ENCODE measurements at regions of chr1 and their contacts with region 1.

Region 1: DNA sequence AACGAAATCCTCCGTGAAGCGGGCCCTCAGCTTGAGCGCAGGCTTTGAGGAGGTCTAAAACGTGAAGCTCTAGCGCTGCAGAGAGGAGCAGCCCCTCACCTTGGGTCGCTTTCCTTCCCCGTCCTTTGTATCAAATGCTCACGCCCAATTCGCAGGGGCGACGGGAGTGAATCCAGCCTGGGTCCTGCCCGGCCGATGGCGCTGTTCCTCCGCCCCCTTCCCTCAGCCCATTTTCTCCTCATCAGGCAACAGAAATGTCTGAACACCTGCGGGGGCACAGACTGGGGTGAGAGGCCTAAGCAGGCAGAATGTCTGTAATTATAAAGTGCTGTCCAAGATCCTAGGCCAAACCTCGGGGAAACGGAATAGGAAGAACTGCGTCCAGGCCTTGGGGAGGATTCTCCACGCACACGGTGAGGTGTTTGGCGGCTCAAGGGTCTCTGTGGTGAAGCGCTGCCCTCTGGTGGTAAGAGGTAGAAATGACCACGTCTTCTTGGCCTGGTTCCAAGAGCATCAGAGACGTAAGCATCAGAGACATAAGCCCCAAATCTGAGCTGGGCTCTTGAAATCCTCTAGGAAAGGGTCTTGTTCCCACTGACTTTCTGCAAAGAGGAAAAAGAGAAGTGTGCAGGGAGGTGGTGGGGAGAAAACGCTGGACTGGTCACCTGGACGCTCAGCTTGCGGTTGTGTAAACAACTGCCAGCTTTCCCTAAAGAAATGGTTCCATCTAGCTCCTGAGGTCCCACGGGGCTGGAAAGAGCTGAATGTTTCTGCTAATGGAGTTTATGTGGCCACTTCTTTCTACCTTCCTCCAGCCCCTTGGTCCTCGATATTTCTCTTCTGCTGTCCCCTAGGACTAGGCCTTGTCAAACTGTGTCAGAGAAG is 92.1 kb upstream of the CD53 start:
- DNase-seq: peak; percentile 74 to 81 (median 76)
- H3K4me3 ChIP-seq: no peak overlapping the region
- H3K4me3 Mint-ChIP-seq: peak overlapping the region in 5 of 8 donors; percentile 3 to 47 (median 28)
- H3K27ac ChIP-seq: no peak overlapping the region
- H3K27ac Mint-ChIP-seq: peak overlapping the region in 3 of 7 donors; percentile 31 to 74 (median 67)
- H3K4me1 ChIP-seq: peaks cover 37% of the 10 kb centered on the region
- H3K4me1 Mint-ChIP-seq: peaks cover 33 to 51% (median 39%) of the 10 kb centered on the region in 4 donors
- H3K27me3 ChIP-seq: no peaks in the 10 kb centered on the region
- H3K27me3 Mint-ChIP-seq: peaks cover 0 to 1% of the 10 kb centered on the region in 2 donors

Region 2: GRCh38 chr1:110209715-110210603 is 570.9 kb before region 1 on chr1 and contains the start of gene KCNC4:
- CTCF ChIA-PET with region 1: interaction called, 10 read pairs
- POLR2A ChIA-PET with region 1: no interaction called
- intact Hi-C with region 1: no loop called
- DNase-seq: peak; percentile 91 to 95 (median 94)
- H3K4me3 ChIP-seq: peak within 1 kb of the TSS; percentile 36 to 68
- H3K4me3 Mint-ChIP-seq: peak within 1 kb of the TSS; percentile 87 to 95 (median 89)
- H3K27ac ChIP-seq: peak within 1 kb of the TSS; percentile 81
- H3K27ac Mint-ChIP-seq: peak within 1 kb of the TSS; percentile 89 to 98 (median 97)
- H3K4me1 ChIP-seq: peaks cover 44% of the 10 kb centered on the region
- H3K4me1 Mint-ChIP-seq: peaks cover 32 to 64% (median 45%) of the 10 kb centered on the region in 4 donors
- H3K27me3 ChIP-seq: no peaks in the 10 kb centered on the region
- H3K27me3 Mint-ChIP-seq: no peaks in the 10 kb centered on the region
- total RNA-seq, gene KCNC4: 11.9 to 13.4 TPM

Region 3: DNA sequence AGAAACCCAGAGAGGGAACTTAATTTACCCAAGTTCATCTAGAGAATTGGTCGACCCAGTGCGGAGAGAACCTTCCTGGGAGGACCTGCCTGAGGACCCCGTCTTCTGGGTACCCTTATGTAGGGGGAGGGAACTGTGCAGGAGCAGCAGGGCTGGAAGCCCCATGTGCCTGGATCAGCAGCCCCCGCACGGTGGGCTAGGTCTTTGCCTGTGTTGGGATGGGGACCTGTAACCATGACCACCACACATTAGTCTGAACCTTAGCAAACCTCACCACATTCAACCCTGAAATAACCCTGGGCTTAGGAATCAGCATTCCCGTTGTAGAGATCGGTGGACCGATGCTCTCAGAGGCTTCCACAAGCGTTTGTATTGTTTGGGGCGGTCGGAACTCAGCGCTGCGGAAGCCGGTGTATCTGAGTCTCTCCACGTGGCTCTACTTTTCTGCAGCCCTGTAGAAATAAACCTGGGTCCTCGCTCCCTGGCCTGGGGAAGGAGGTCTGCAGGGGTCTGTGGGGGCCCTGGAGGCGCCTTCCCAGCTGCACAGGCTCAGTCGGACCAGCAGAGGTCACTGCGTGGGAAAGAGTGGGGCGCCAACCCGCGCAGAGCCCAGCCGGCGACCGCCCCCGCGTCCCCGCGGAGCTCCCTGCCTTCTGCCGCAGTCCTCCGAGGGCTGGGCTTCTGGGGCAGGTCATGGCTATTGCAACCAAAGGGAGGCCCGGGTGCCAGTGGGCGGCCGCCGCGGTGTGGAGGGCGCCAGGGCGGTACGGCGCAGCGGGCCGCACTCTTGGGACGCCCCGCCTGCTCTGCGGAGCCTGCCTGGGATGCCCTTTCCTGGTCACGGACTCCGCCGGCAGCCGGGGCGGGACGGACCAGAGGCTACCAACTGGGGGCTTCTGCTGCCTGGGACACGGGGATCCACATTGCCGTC is 225.7 kb before region 1 on chr1:
- CTCF ChIA-PET with region 1: interaction called, 91 read pairs
- POLR2A ChIA-PET with region 1: no interaction called
- intact Hi-C with region 1: loop called (anchors 1 kb)
- DNase-seq: peak in 4 of 5 donors; percentile 43 to 56 (median 51)
- H3K4me3 ChIP-seq: no peak overlapping the region
- H3K4me3 Mint-ChIP-seq: peak overlapping the region in 6 of 8 donors; percentile 29 to 68 (median 50)
- H3K27ac ChIP-seq: no peak overlapping the region
- H3K27ac Mint-ChIP-seq: no peak overlapping the region
- H3K4me1 ChIP-seq: peaks cover 3% of the 10 kb centered on the region
- H3K4me1 Mint-ChIP-seq: peaks cover 2 to 9% (median 4%) of the 10 kb centered on the region in 4 donors
- H3K27me3 ChIP-seq: peaks cover 18% of the 10 kb centered on the region
- H3K27me3 Mint-ChIP-seq: peaks cover 30 to 43% of the 10 kb centered on the region in 2 donors

Region 4: DNA sequence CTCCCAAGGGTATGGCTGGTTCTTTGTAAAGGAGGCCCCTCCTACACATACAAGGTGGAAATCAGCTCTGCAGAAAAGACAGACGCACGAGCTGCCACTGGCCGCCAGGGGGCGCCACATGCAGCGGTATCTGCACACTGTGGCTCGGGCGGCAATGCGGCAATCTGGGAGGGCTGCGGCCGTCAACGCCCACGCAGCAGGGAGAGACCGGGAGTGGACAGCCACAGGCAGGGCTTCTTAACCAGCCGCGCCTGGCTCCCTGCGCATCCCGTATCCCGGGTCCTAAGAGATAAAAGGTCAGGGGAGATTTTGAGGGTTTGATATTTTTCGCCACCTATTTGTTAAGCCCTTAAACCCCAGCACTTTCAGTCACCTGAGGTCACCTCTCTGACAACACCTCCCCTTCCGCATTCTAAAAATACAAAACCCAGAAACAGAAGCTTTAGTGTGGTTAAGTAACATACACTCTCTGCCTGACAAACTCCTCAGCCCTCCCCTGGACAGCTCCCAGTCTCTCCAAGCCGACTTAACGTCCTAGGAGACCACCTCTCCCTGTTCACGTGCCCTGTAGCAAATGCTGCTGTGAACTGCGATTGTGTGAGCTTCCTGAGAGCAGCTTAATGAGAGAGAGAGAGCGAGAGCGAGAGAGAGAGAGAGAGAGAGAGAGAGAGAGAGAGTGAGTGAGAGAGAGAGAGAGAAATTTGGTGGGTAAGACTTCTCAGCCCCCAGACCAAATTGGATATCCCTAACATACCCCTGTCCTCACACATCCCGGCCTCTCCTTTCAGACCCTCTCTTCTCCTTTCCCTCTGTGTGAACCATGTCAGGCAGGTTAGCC is 161.2 kb before region 1 on chr1:
- CTCF ChIA-PET with region 1: interaction called, 175 read pairs
- POLR2A ChIA-PET with region 1: interaction called, 19 read pairs
- intact Hi-C with region 1: loop called (anchors 1 kb)
- DNase-seq: peak; percentile 86 to 92 (median 91)
- H3K4me3 ChIP-seq: peak overlapping the region; percentile 60 to 77
- H3K4me3 Mint-ChIP-seq: peak overlapping the region; percentile 86 to 97 (median 91)
- H3K27ac ChIP-seq: peak overlapping the region; percentile 50
- H3K27ac Mint-ChIP-seq: peak overlapping the region; percentile 90 to 99 (median 97)
- H3K4me1 ChIP-seq: peaks cover 33% of the 10 kb centered on the region
- H3K4me1 Mint-ChIP-seq: peaks cover 32 to 50% (median 38%) of the 10 kb centered on the region in 4 donors
- H3K27me3 ChIP-seq: no peaks in the 10 kb centered on the region
- H3K27me3 Mint-ChIP-seq: no peaks in the 10 kb centered on the region

Region 5: DNA sequence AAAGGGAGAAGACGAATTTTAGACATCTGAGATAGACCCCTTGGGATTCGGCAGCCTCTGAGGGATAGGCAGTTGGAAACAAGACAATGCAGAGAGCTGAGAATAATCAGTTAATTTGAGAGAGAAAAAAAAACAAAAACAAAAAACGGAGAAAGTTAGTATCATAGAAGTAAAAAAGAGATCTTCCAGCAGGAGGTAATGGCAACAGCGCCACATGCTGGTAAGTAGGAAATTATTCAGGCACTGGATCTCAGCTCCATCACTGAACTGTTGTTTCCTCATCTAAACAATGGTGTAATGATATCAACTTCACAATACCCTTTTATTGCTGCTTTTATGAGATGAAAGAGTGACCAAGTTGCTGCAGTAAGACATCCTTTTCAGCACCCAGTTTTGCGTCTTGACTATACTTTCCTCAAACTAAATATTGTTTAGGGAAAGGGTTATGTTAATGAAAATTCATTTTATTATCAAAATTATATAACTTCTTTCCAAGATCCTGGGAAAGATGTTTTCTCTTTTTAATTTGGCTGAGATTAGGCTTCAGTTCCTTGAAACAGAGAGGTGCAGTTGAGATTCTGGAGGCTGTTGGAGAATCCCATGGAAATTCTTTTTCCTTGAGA is 14.7 kb before region 1 on chr1:
- CTCF ChIA-PET with region 1: interaction called, 89 read pairs
- POLR2A ChIA-PET with region 1: no interaction called
- intact Hi-C with region 1: loop called (anchors 1 kb)
- DNase-seq: peak; percentile 59 to 71 (median 68)
- H3K4me3 ChIP-seq: no peak overlapping the region
- H3K4me3 Mint-ChIP-seq: no peak overlapping the region
- H3K27ac ChIP-seq: no peak overlapping the region
- H3K27ac Mint-ChIP-seq: peak overlapping the region in 1 of 7 donors; percentile 80
- H3K4me1 ChIP-seq: peaks cover 4% of the 10 kb centered on the region
- H3K4me1 Mint-ChIP-seq: peaks cover 0 to 9% (median 2%) of the 10 kb centered on the region in 4 donors
- H3K27me3 ChIP-seq: no peaks in the 10 kb centered on the region
- H3K27me3 Mint-ChIP-seq: peaks cover 12% of the 10 kb centered on the region in 2 donors

Region 6: GRCh38 chr1:110872745-110873720 is 92.2 kb after region 1 on chr1 and contains the start of gene CD53:
- CTCF ChIA-PET with region 1: interaction called, 11 read pairs
- POLR2A ChIA-PET with region 1: interaction called, 69 read pairs
- intact Hi-C with region 1: loop called (anchors 2 kb)
- DNase-seq: peak; percentile 70 to 82 (median 73)
- H3K4me3 ChIP-seq: peak within 1 kb of the TSS; percentile 79 to 92
- H3K4me3 Mint-ChIP-seq: peak within 1 kb of the TSS; percentile 94 to 100 (median 98)
- H3K27ac ChIP-seq: peak within 1 kb of the TSS; percentile 88
- H3K27ac Mint-ChIP-seq: peak within 1 kb of the TSS; percentile 93 to 99 (median 98)
- H3K4me1 ChIP-seq: peaks cover 54% of the 10 kb centered on the region
- H3K4me1 Mint-ChIP-seq: peaks cover 43 to 79% (median 52%) of the 10 kb centered on the region in 4 donors
- H3K27me3 ChIP-seq: no peaks in the 10 kb centered on the region
- H3K27me3 Mint-ChIP-seq: no peaks in the 10 kb centered on the region
- total RNA-seq, gene CD53: 337 to 338 TPM

Region 7: DNA sequence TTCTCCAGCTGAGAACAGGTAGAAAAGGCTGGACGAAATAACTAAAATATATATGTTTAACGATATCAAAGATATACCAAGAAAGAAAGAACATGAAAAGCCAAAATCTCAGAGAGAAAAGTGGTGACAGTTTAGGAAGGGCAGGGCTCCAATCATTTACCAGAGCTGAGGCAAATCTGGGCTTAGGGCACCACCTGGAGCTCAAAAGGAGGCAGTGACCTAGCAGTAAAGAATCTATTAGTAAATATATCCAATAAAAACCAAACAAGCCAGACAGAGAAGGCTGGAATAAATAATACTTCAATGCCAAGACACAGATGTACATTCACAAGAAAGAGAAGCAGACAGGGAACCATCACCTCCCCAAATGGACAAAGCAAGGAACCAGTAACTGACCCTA is 553.3 kb after region 1 on chr1:
- CTCF ChIA-PET with region 1: no interaction called
- POLR2A ChIA-PET with region 1: no interaction called
- intact Hi-C with region 1: loop called (anchors 5 kb)
- DNase-seq: peak; percentile 49 to 69 (median 68)
- H3K4me3 ChIP-seq: no peak overlapping the region
- H3K4me3 Mint-ChIP-seq: peak overlapping the region in 2 of 8 donors; percentile 24 to 45
- H3K27ac ChIP-seq: no peak overlapping the region
- H3K27ac Mint-ChIP-seq: peak overlapping the region in 3 of 7 donors; percentile 1 to 74 (median 3)
- H3K4me1 ChIP-seq: peaks cover 7% of the 10 kb centered on the region
- H3K4me1 Mint-ChIP-seq: peaks cover 2 to 12% (median 4%) of the 10 kb centered on the region in 4 donors
- H3K27me3 ChIP-seq: no peaks in the 10 kb centered on the region
- H3K27me3 Mint-ChIP-seq: no peaks in the 10 kb centered on the region